AG04450 (cell line): ENCODE measurements at regions of chr5 and their contacts with region 1.

Region 1: GRCh38 chr5:67165526-67166459 is 30.8 kb downstream of the CD180 start:
- DNase-seq: peak; percentile 29
- H3K4me3 ChIP-seq: no peak overlapping the region
- H3K27ac ChIP-seq: peak overlapping the region; percentile 21
- H3K27me3 ChIP-seq: no peaks in the 10 kb centered on the region
- CTCF ChIP-seq: peak; percentile 78

Region 2: GRCh38 chr5:66807743-66808142 is 358.1 kb before region 1 on chr5:
- CTCF ChIA-PET with region 1: interaction called, 12 read pairs
- POLR2A ChIA-PET with region 1: no interaction called
- DNase-seq: peak; percentile 16
- H3K4me3 ChIP-seq: no peak overlapping the region
- H3K27ac ChIP-seq: no peak overlapping the region
- H3K27me3 ChIP-seq: peaks cover 12% of the 10 kb centered on the region
- CTCF ChIP-seq: peak; percentile 62

Region 3: GRCh38 chr5:67648201-67648671 is 482.4 kb after region 1 on chr5:
- CTCF ChIA-PET with region 1: interaction called, 10 read pairs
- POLR2A ChIA-PET with region 1: no interaction called
- DNase-seq: no peak
- H3K4me3 ChIP-seq: no peak overlapping the region
- H3K27ac ChIP-seq: no peak overlapping the region
- H3K27me3 ChIP-seq: no peaks in the 10 kb centered on the region
- CTCF ChIP-seq: no peak

Region 4: DNA sequence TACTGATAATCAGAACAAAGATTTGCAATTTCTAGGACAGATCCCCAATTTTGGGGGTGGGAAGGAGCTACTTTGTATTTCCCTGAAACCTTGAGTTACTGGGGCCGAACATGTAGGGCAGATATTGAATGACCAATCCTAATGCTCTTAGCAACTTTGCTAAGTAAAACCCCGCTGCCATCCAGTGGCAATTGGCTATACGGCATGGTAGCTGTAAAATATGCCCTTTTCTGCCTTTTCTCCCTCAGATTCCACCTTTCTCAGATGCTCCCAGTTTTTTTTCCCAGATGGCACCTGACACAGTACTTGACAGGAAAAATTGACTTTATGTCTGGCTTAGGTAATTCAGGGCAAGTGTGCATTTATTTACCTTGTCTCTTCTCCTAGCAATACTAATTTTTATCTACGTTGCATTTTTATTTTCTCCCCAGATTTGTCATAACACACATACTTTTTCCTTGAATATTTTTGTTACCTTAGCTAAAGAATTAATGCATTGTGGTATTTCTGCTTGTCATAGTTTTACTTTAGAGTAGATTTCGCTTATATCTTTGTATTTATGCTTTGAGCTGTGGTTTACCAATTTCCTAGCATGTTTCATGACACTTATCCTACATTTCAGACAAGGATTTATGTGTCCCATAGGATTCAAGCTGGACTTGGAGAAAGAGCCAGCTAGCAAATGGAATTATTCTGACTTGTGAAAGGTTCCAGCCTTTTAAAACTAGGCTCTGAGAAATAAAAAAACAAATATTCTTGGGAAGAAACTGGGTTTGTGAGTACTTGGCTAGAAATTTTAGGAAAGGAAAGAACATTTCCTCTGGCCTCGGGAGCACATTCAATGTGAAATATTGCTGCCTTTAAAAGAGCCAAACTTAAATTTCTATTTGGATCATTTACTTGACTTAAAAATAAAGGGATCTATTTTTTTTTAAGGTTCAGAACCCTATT is 1087.2 kb after region 1 on chr5:
- CTCF ChIA-PET with region 1: interaction called, 22 read pairs
- POLR2A ChIA-PET with region 1: no interaction called
- DNase-seq: peak; percentile 42
- H3K4me3 ChIP-seq: no peak overlapping the region
- H3K27ac ChIP-seq: no peak overlapping the region
- H3K27me3 ChIP-seq: no peaks in the 10 kb centered on the region
- CTCF ChIP-seq: peak; percentile 93